ENCODE measurements at regions of chr6 and their contacts with region 1.

Region 1: GRCh38 chr6:144582939-144583613 is 297.9 kb downstream of the UTRN start:
- DNase-seq: no peak
- ATAC-seq: no peak
- H3K4me3 ChIP-seq: no peak overlapping the region
- H3K27ac ChIP-seq: no peak overlapping the region
- H3K4me1 ChIP-seq: peaks cover 32% of the 10 kb centered on the region
- H3K27me3 ChIP-seq: no peaks in the 10 kb centered on the region
- CTCF ChIP-seq: no peak
- EP300 ChIP-seq: no peak
- POLR2A ChIP-seq: no peak
- RAD21 ChIP-seq: no peak

Region 2: GRCh38 chr6:144659202-144660182 is 76.4 kb after region 1 on chr6:
- CTCF ChIA-PET with region 1: no interaction called
- POLR2A ChIA-PET with region 1: interaction called, 3 read pairs
- in situ Hi-C with region 1: no loop called
- intact Hi-C with region 1: loop called (anchors 1 kb)
- DNase-seq: peak; percentile 42
- ATAC-seq: peak; percentile 34
- H3K4me3 ChIP-seq: peak overlapping the region in 1 of 3 experiments; percentile 13; a peak in 1 of 6 replicates
- H3K27ac ChIP-seq: peak overlapping the region; percentile 60
- H3K4me1 ChIP-seq: peaks cover 95% of the 10 kb centered on the region
- H3K27me3 ChIP-seq: no peaks in the 10 kb centered on the region
- CTCF ChIP-seq: no peak
- EP300 ChIP-seq: no peak
- POLR2A ChIP-seq: no peak
- RAD21 ChIP-seq: no peak

Region 3: GRCh38 chr6:144931172-144932035 is 348.3 kb after region 1 on chr6:
- CTCF ChIA-PET with region 1: interaction called, 7 read pairs
- POLR2A ChIA-PET with region 1: no interaction called
- in situ Hi-C with region 1: loop called (anchors 5 kb)
- intact Hi-C with region 1: loop called (anchors 1 kb)
- DNase-seq: peak; percentile 27
- ATAC-seq: peak; percentile 93
- H3K4me3 ChIP-seq: no peak overlapping the region
- H3K27ac ChIP-seq: no peak overlapping the region
- H3K4me1 ChIP-seq: no peaks in the 10 kb centered on the region
- H3K27me3 ChIP-seq: peaks cover 0 to 6% of the 10 kb centered on the region in 2 experiments; a peak in 1 of 5 replicates
- CTCF ChIP-seq: peak; percentile 81
- EP300 ChIP-seq: no peak
- POLR2A ChIP-seq: no peak
- RAD21 ChIP-seq: peak; percentile 69

Region 4: GRCh38 chr6:145028144-145028818 is 445.2 kb after region 1 on chr6:
- CTCF ChIA-PET with region 1: no interaction called
- POLR2A ChIA-PET with region 1: no interaction called
- in situ Hi-C with region 1: loop called (anchors 10 kb)
- intact Hi-C with region 1: loop called (anchors 2 kb)
- DNase-seq: peak; percentile 11
- ATAC-seq: peak; percentile 31; the same call in 2 of the 3 replicates
- H3K4me3 ChIP-seq: no peak overlapping the region; a peak in 1 of 6 replicates
- H3K27ac ChIP-seq: no peak overlapping the region
- H3K4me1 ChIP-seq: peaks cover 45% of the 10 kb centered on the region
- H3K27me3 ChIP-seq: no peaks in the 10 kb centered on the region
- CTCF ChIP-seq: peak; percentile 65
- EP300 ChIP-seq: no peak; a peak in 1 of 4 replicates
- POLR2A ChIP-seq: no peak
- RAD21 ChIP-seq: no peak

Region 5: GRCh38 chr6:145267076-145267867 is 684.2 kb after region 1 on chr6:
- CTCF ChIA-PET with region 1: no interaction called
- POLR2A ChIA-PET with region 1: no interaction called
- in situ Hi-C with region 1: no loop called
- intact Hi-C with region 1: loop called (anchors 2 kb)
- DNase-seq: peak; percentile 100
- ATAC-seq: peak; percentile 99
- H3K4me3 ChIP-seq: peak overlapping the region; percentile 13 to 49 (median 43); a peak in 4 of 6 replicates
- H3K27ac ChIP-seq: peak overlapping the region; percentile 93
- H3K4me1 ChIP-seq: peaks cover 72% of the 10 kb centered on the region
- H3K27me3 ChIP-seq: no peaks in the 10 kb centered on the region
- CTCF ChIP-seq: peak; percentile 16
- EP300 ChIP-seq: peak; percentile 96 to 98
- POLR2A ChIP-seq: peak; percentile 41 to 90; a peak in 3 of 4 replicates
- RAD21 ChIP-seq: peak; percentile 69; the same call in 1 of the 2 replicates